ENCODE measurements at regions of chr9 and their contacts with region 1.

Region 1: GRCh38 chr9:97386733-97387503 is 25.0 kb upstream of the TDRD7 start:
- DNase-seq: peak; percentile 28 to 78 (median 70)
- ATAC-seq: peak; percentile 77
- H3K4me3 ChIP-seq: no peak overlapping the region
- H3K4me3 Mint-ChIP-seq: no peak overlapping the region
- H3K27ac ChIP-seq: no peak overlapping the region
- H3K27ac Mint-ChIP-seq: no peak overlapping the region
- H3K4me1 ChIP-seq: no peaks in the 10 kb centered on the region
- H3K4me1 Mint-ChIP-seq: peaks cover 4% of the 10 kb centered on the region
- H3K27me3 ChIP-seq: no peaks in the 10 kb centered on the region
- H3K27me3 Mint-ChIP-seq: peaks cover 12% of the 10 kb centered on the region
- CTCF ChIP-seq: peak; percentile 98

Region 2: GRCh38 chr9:97367729-97368128 is 19.2 kb before region 1 on chr9:
- CTCF ChIA-PET with region 1: interaction called, 10 read pairs
- POLR2A ChIA-PET with region 1: no interaction called
- intact Hi-C with region 1: no loop called
- DNase-seq: no peak
- ATAC-seq: no peak
- H3K4me3 ChIP-seq: no peak overlapping the region
- H3K4me3 Mint-ChIP-seq: no peak overlapping the region
- H3K27ac ChIP-seq: no peak overlapping the region
- H3K27ac Mint-ChIP-seq: no peak overlapping the region
- H3K4me1 ChIP-seq: no peaks in the 10 kb centered on the region
- H3K4me1 Mint-ChIP-seq: peaks cover 2% of the 10 kb centered on the region
- H3K27me3 ChIP-seq: no peaks in the 10 kb centered on the region
- H3K27me3 Mint-ChIP-seq: no peaks in the 10 kb centered on the region
- CTCF ChIP-seq: no peak

Region 3: DNA sequence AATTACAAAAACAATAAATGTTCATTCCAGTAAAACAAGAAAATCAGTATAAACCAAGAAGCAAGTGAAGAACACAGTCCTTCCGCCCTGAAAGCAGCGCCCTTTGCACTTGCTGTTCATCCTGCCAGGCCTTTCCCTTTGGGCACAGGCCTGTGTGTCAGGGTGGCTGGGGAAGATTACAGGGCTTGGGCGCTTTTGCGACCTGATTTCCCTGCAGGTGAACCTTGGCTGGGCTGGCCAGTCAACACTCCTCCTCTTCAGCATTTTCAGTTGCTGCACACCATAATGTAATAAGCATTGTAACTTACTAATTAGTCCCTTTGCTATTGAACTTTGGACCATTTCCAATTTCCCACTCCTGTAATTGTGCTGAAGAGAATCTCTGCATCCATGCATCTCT is 13.6 kb before region 1 on chr9:
- CTCF ChIA-PET with region 1: interaction called, 25 read pairs
- POLR2A ChIA-PET with region 1: no interaction called
- intact Hi-C with region 1: no loop called
- DNase-seq: no peak
- ATAC-seq: no peak
- H3K4me3 ChIP-seq: no peak overlapping the region
- H3K4me3 Mint-ChIP-seq: no peak overlapping the region
- H3K27ac ChIP-seq: no peak overlapping the region
- H3K27ac Mint-ChIP-seq: no peak overlapping the region
- H3K4me1 ChIP-seq: no peaks in the 10 kb centered on the region
- H3K4me1 Mint-ChIP-seq: no peaks in the 10 kb centered on the region
- H3K27me3 ChIP-seq: no peaks in the 10 kb centered on the region
- H3K27me3 Mint-ChIP-seq: no peaks in the 10 kb centered on the region
- CTCF ChIP-seq: no peak

Region 4: DNA sequence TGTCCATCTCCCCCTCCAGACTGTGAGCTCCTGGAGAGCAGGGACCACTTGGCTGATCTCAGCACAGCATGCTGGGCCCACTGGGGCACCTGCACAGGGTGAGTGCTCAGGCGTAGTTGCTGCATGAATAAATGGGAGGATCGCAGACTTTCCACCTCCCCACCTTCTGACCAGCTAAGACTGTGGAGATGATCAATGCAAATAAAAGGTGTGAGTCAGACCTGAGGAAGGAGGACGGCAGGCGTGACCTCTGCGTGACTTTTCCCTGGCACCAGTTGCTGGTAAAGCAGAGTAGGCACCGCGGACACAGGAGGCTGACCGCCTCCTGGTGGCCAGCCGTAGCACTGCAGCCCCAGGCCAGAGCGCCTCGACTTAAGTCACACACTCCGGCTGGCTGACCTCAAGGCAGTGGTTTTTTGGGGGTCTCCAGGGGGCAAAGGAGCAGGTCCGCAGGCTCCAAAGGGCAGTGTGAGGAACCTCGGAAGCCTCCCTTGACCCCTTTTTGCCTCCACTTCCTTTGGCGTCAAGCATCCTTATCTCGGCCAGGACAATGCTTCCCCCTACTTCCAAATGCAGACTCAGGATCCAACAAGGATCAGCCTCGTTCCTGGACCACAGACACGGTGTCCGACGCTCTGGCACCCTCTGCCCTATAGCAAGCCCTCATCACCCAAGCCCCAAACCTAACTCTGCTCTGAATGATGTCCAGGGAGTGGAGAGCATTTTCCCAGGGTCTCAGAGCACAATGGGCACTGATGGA is 12.3 kb after region 1 on chr9:
- CTCF ChIA-PET with region 1: interaction called, 43 read pairs
- POLR2A ChIA-PET with region 1: interaction called, 3 read pairs
- intact Hi-C with region 1: loop called in 1 of 2 experiments (anchors 1 kb)
- DNase-seq: peak; percentile 37 to 77 (median 68)
- ATAC-seq: peak; percentile 89
- H3K4me3 ChIP-seq: no peak overlapping the region
- H3K4me3 Mint-ChIP-seq: no peak overlapping the region
- H3K27ac ChIP-seq: no peak overlapping the region
- H3K27ac Mint-ChIP-seq: no peak overlapping the region
- H3K4me1 ChIP-seq: no peaks in the 10 kb centered on the region
- H3K4me1 Mint-ChIP-seq: no peaks in the 10 kb centered on the region
- H3K27me3 ChIP-seq: no peaks in the 10 kb centered on the region
- H3K27me3 Mint-ChIP-seq: peaks cover 2% of the 10 kb centered on the region
- CTCF ChIP-seq: peak; percentile 98

Region 5: GRCh38 chr9:97615439-97616072 is 228.6 kb after region 1 on chr9:
- CTCF ChIA-PET with region 1: interaction called, 5 read pairs
- POLR2A ChIA-PET with region 1: no interaction called
- intact Hi-C with region 1: loop called (anchors 1 kb)
- DNase-seq: peak in 8 of 9 experiments; percentile 22 to 74 (median 58)
- ATAC-seq: peak; percentile 67
- H3K4me3 ChIP-seq: no peak overlapping the region
- H3K4me3 Mint-ChIP-seq: no peak overlapping the region
- H3K27ac ChIP-seq: no peak overlapping the region
- H3K27ac Mint-ChIP-seq: no peak overlapping the region
- H3K4me1 ChIP-seq: no peaks in the 10 kb centered on the region
- H3K4me1 Mint-ChIP-seq: peaks cover 2% of the 10 kb centered on the region
- H3K27me3 ChIP-seq: no peaks in the 10 kb centered on the region
- H3K27me3 Mint-ChIP-seq: no peaks in the 10 kb centered on the region
- CTCF ChIP-seq: peak; percentile 97

Measured in CD8-positive, alpha-beta T cell (primary cell).